Psoas muscle (tissue), 8 donors: ENCODE measurements at regions of chr11 and their contacts with region 1.

Region 1: GRCh38 chr11:925496-926321 is at the start of gene AP2A2:
- DNase-seq: peak; percentile 95
- ATAC-seq: peak; percentile 93 to 96 (median 94)
- H3K4me3 ChIP-seq: peak within 1 kb of the TSS; percentile 80
- H3K27ac ChIP-seq: peak within 1 kb of the TSS; percentile 86
- H3K4me1 ChIP-seq: peaks cover 23% of the 10 kb centered on the region
- H3K27me3 ChIP-seq: no peaks in the 10 kb centered on the region
- CTCF ChIP-seq: peak; percentile 83
- total RNA-seq, gene AP2A2: 26.5 to 31.4 (median 27.7) TPM

Region 2: DNA sequence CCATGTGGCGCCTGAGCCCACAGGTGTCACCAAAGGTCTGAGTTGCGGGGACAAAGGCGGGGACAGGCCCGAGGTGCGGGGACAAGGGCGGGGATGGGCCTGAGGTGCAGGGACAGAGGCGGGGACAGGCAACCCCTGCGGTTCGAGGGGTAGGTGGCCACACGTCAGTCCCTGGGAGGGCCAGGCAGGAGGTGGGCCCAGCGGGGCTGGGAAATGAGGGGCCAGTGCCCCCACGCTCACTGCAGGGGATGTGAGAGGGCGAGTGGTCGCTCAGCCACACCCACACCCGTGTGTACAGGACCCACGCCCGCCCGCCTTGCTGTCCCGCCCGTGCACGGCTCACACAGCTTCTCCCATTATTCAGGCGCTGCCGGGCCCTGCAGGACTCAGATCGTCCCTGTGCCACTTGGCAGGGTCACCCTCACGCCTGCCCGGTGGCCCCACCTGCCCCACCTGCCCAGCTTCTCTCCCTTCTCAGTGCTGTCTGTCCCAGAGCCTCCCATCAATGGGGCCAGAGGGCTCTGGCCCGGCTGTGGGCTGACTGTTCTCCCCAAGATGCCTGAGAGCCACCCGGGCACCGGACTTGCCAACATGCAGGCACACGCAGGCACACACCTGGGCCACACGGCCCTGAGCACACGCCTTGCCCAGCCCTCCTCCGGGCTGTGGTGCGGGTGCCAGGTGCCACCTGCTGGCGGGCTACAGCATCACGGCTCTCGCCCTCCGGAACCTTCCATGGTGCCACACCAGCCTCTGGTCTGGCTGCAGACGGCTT is 125.1 kb after region 1 on chr11:
- intact Hi-C with region 1: loop called (anchors 5 kb)
- DNase-seq: peak; percentile 52 to 81
- ATAC-seq: peak; percentile 92 to 99 (median 96)
- H3K4me3 ChIP-seq: no peak overlapping the region
- H3K27ac ChIP-seq: no peak overlapping the region
- H3K4me1 ChIP-seq: no peaks in the 10 kb centered on the region
- H3K27me3 ChIP-seq: peaks cover 0 to 24% (median 16%) of the 10 kb centered on the region in 3 donors
- CTCF ChIP-seq: peak; percentile 87